ENCODE measurements at regions of chr17 and their contacts with region 1.

Region 1: GRCh38 chr17:41811549-41812380 is at the start of gene P3H4:
- DNase-seq: peak; percentile 86 to 87
- ATAC-seq: peak; percentile 83 to 86
- H3K4me3 ChIP-seq: peak within 1 kb of the TSS; percentile 79
- H3K27ac ChIP-seq: peak within 1 kb of the TSS; percentile 96 to 97
- H3K4me1 ChIP-seq: peaks cover 30% of the 10 kb centered on the region
- CTCF ChIP-seq: peak; percentile 90
- EP300 ChIP-seq: no peak
- POLR2A ChIP-seq: peak; percentile 47; the same call in 1 of the 2 replicates
- RAD21 ChIP-seq: peak; percentile 51 to 80
- polyA plus RNA-seq, gene P3H4: 32.1 and 36.0 TPM in 2 replicates

Region 2: DNA sequence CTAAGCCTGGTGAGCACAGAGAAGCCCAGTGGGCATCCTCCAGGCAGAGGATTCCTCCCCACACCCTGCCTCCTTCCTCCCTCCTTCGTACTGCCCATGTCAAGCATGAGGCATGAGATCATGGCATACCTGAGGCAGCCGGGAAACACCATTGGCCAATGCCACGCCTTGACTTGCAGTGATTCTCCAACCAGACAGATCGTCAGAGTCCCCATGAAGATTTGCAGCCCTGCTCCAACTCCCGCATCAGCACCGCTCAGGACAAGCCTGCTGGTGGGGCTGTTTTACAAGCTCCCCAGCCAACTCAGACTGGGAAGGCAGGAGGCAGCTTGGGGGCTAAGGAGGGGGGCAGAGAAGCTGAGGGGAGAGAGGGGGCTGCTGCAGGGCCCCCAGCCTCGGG is 196.3 kb before region 1 on chr17:
- CTCF ChIA-PET with region 1: no interaction called
- POLR2A ChIA-PET with region 1: no interaction called
- DNase-seq: peak in 1 of 2 experiments; percentile 58
- ATAC-seq: no peak
- H3K4me3 ChIP-seq: no peak overlapping the region
- H3K27ac ChIP-seq: no peak overlapping the region
- H3K4me1 ChIP-seq: peaks cover 12% of the 10 kb centered on the region
- CTCF ChIP-seq: no peak
- EP300 ChIP-seq: no peak
- POLR2A ChIP-seq: no peak
- RAD21 ChIP-seq: no peak

Region 3: GRCh38 chr17:41738077-41738735 is 73.6 kb before region 1 on chr17:
- CTCF ChIA-PET with region 1: interaction called, 3,262 read pairs
- POLR2A ChIA-PET with region 1: interaction called, 11 read pairs
- DNase-seq: peak; percentile 89 to 96
- ATAC-seq: peak; percentile 55 to 82
- H3K4me3 ChIP-seq: no peak overlapping the region
- H3K27ac ChIP-seq: peak overlapping the region; percentile 68 to 85
- H3K4me1 ChIP-seq: peaks cover 38% of the 10 kb centered on the region
- CTCF ChIP-seq: peak; percentile 99
- EP300 ChIP-seq: no peak
- POLR2A ChIP-seq: no peak
- RAD21 ChIP-seq: peak; percentile 100

Region 4: GRCh38 chr17:41801374-41802271 is 10.1 kb before region 1 on chr17:
- CTCF ChIA-PET with region 1: interaction called, 3,262 read pairs
- POLR2A ChIA-PET with region 1: interaction called, 8 read pairs
- DNase-seq: peak; percentile 86 to 88
- ATAC-seq: peak; percentile 80 to 86
- H3K4me3 ChIP-seq: no peak overlapping the region
- H3K27ac ChIP-seq: peak overlapping the region; percentile 80 to 86
- H3K4me1 ChIP-seq: peaks cover 23% of the 10 kb centered on the region
- CTCF ChIP-seq: peak; percentile 98
- EP300 ChIP-seq: peak in 1 of 2 experiments; percentile 23; a peak in 1 of 5 replicates
- POLR2A ChIP-seq: no peak
- RAD21 ChIP-seq: peak; percentile 99

Region 5: GRCh38 chr17:41835800-41836549 is 24.2 kb after region 1 on chr17 and contains the start of gene NT5C3B:
- CTCF ChIA-PET with region 1: interaction called, 18 read pairs
- POLR2A ChIA-PET with region 1: interaction called, 3 read pairs
- DNase-seq: peak; percentile 60 to 93
- ATAC-seq: peak; percentile 94
- H3K4me3 ChIP-seq: peak within 1 kb of the TSS; percentile 74
- H3K27ac ChIP-seq: peak within 1 kb of the TSS; percentile 87 to 97
- H3K4me1 ChIP-seq: peaks cover 13% of the 10 kb centered on the region
- CTCF ChIP-seq: no peak
- EP300 ChIP-seq: no peak
- POLR2A ChIP-seq: peak; percentile 85
- RAD21 ChIP-seq: no peak
- polyA plus RNA-seq, gene NT5C3B: 167 and 171 TPM in 2 replicates

Region 6: GRCh38 chr17:41885733-41886132 is 74.0 kb after region 1 on chr17:
- CTCF ChIA-PET with region 1: interaction called, 12 read pairs
- POLR2A ChIA-PET with region 1: interaction called, 3 read pairs
- DNase-seq: peak; percentile 48 to 66
- ATAC-seq: peak; percentile 62 to 67
- H3K4me3 ChIP-seq: no peak overlapping the region
- H3K27ac ChIP-seq: peak overlapping the region in 1 of 2 experiments; percentile 1; a peak in 1 of 6 replicates
- H3K4me1 ChIP-seq: peaks cover 10% of the 10 kb centered on the region; the same call in 2 of the 3 replicates
- CTCF ChIP-seq: peak; percentile 54
- EP300 ChIP-seq: no peak
- POLR2A ChIP-seq: no peak
- RAD21 ChIP-seq: peak; percentile 60 to 69

Region 7: GRCh38 chr17:41966463-41967140 is 154.8 kb after region 1 on chr17 and contains the start of gene CNP:
- CTCF ChIA-PET with region 1: interaction called, 31 read pairs
- POLR2A ChIA-PET with region 1: interaction called, 7 read pairs
- DNase-seq: peak; percentile 92 to 95
- ATAC-seq: peak; percentile 69 to 85
- H3K4me3 ChIP-seq: peak within 1 kb of the TSS; percentile 79
- H3K27ac ChIP-seq: peak within 1 kb of the TSS; percentile 75 to 96
- H3K4me1 ChIP-seq: peaks cover 12% of the 10 kb centered on the region; the same call in 2 of the 3 replicates
- CTCF ChIP-seq: no peak
- EP300 ChIP-seq: no peak
- POLR2A ChIP-seq: peak; percentile 84
- RAD21 ChIP-seq: no peak
- polyA plus RNA-seq, gene CNP: 38.6 and 49.8 TPM in 2 replicates

Measured in A549 (cell line).